ENCODE measurements at regions of chr9 and their contacts with region 1.

Region 1: DNA sequence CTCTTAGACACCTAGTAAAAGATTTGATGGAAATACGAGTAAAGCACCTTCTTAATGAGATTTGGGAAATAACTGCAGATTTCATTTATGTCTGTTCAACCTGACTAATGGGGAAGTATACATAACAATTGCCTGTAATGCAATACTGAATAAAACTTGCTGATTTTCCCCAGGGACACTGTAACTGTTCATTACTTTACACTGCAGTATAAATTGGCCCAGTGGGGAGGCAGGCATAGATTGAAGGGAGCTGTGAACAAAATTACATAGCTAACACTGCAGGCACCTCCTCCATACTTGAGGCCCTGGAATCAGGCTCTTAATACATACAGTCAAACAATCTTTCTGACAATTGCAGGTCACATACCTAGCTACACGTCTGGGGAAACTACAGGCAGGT is 216.2 kb downstream of the PTPRD start:
- DNase-seq: no peak
- ATAC-seq: no peak
- H3K4me3 ChIP-seq: no peak overlapping the region
- H3K27ac ChIP-seq: no peak overlapping the region
- H3K4me1 ChIP-seq: no peaks in the 10 kb centered on the region
- H3K27me3 ChIP-seq: no peaks in the 10 kb centered on the region
- CTCF ChIP-seq: no peak
- EP300 ChIP-seq: no peak
- POLR2A ChIP-seq: no peak
- RAD21 ChIP-seq: no peak

Region 2: GRCh38 chr9:12351293-12352044 is 1954.9 kb after region 1 on chr9:
- CTCF ChIA-PET with region 1: no interaction called
- POLR2A ChIA-PET with region 1: no interaction called
- in situ Hi-C with region 1: loop called (anchors 25 kb)
- intact Hi-C with region 1: no loop called
- DNase-seq: no peak
- ATAC-seq: no peak
- H3K4me3 ChIP-seq: no peak overlapping the region
- H3K27ac ChIP-seq: no peak overlapping the region
- H3K4me1 ChIP-seq: no peaks in the 10 kb centered on the region
- H3K27me3 ChIP-seq: no peaks in the 10 kb centered on the region
- CTCF ChIP-seq: no peak
- EP300 ChIP-seq: no peak
- POLR2A ChIP-seq: no peak
- RAD21 ChIP-seq: no peak

Measured in HepG2 (cell line).